ENCODE measurements at regions of chr12 and their contacts with region 1.

Region 1: DNA sequence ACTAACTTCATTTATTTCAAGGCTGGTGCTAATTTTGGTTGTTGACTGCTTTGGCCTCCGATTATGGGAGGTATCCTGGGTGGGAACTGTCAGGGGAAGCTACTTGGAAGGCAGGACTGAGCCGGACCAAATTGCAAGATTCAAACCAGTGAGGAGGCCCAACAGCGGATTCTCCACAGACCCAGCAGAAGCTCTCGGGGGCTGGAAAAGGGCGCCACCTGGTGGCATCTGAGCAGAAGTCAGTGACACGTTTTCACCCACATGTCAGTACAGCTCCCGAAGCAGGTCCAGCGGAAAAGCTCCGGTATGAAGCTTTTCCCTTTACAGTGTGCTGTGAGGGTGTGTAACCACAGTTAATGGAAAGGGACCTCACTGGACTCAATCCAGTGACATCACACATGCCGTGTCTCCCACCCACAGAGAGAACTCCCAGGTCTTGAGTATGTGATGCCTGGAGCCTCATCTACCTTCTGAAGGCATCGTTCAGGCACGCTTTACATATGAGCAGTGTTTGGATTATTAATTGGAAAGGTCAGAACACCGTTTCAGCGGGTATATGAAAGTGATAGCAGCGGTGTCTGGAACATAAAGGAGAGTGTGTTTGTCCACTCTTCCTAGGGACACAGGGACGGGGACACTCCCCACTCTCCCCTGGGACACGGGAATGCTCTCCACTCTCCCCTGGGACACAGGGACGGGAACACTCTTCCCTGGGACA is 3.6 kb upstream of the P2RX2 start:
- DNase-seq: peak; percentile 89

Region 2: GRCh38 chr12:132414634-132415326 is 200.2 kb before region 1 on chr12:
- CTCF ChIA-PET with region 1: interaction called, 17 read pairs
- POLR2A ChIA-PET with region 1: interaction called, 3 read pairs
- DNase-seq: peak; percentile 92

Region 3: GRCh38 chr12:132583736-132584135 is 31.3 kb before region 1 on chr12:
- CTCF ChIA-PET with region 1: no interaction called
- POLR2A ChIA-PET with region 1: no interaction called
- DNase-seq: no peak